Naive thymus-derived CD4-positive, alpha-beta T cell (primary cell): ENCODE measurements at regions of chr18 and their contacts with region 1.

Region 1: GRCh38 chr18:21740724-21741510 is at the start of gene MIB1:
- DNase-seq: peak in 8 of 9 donors; percentile 42 to 99 (median 99)
- ATAC-seq: peak; percentile 69
- H3K4me3 ChIP-seq: peak within 1 kb of the TSS; percentile 77
- H3K4me3 Mint-ChIP-seq: peak within 1 kb of the TSS; percentile 83 to 96 (median 94)
- H3K27ac ChIP-seq: peak within 1 kb of the TSS; percentile 83
- H3K27ac Mint-ChIP-seq: peak within 1 kb of the TSS; percentile 78 to 97 (median 94)
- H3K4me1 ChIP-seq: peaks cover 9 to 13% of the 10 kb centered on the region in 2 donors
- H3K4me1 Mint-ChIP-seq: peaks cover 21 to 58% (median 43%) of the 10 kb centered on the region in 7 donors
- H3K27me3 ChIP-seq: no peaks in the 10 kb centered on the region
- H3K27me3 Mint-ChIP-seq: peaks cover 0 to 18% (median 0%) of the 10 kb centered on the region in 5 donors
- total RNA-seq, gene MIB1: 16.0 to 35.2 (median 19.8) TPM

Region 2: GRCh38 chr18:21600526-21601410 is 140.1 kb before region 1 on chr18 and contains the start of gene ESCO1:
- CTCF ChIA-PET with region 1: no interaction called
- POLR2A ChIA-PET with region 1: interaction called, 30 read pairs
- intact Hi-C with region 1: loop called (anchors 1 kb)
- DNase-seq: peak; percentile 88 to 97 (median 95)
- ATAC-seq: peak; percentile 90
- H3K4me3 ChIP-seq: peak within 1 kb of the TSS; percentile 99
- H3K4me3 Mint-ChIP-seq: peak within 1 kb of the TSS; percentile 91 to 99 (median 96)
- H3K27ac ChIP-seq: peak within 1 kb of the TSS; percentile 84
- H3K27ac Mint-ChIP-seq: peak within 1 kb of the TSS; percentile 96 to 100 (median 99)
- H3K4me1 ChIP-seq: peaks cover 12 to 24% of the 10 kb centered on the region in 2 donors
- H3K4me1 Mint-ChIP-seq: peaks cover 16 to 57% (median 36%) of the 10 kb centered on the region in 7 donors
- H3K27me3 ChIP-seq: no peaks in the 10 kb centered on the region
- H3K27me3 Mint-ChIP-seq: no peaks in the 10 kb centered on the region
- total RNA-seq, gene ESCO1: 25.9 to 36.4 (median 35.1) TPM

Region 3: DNA sequence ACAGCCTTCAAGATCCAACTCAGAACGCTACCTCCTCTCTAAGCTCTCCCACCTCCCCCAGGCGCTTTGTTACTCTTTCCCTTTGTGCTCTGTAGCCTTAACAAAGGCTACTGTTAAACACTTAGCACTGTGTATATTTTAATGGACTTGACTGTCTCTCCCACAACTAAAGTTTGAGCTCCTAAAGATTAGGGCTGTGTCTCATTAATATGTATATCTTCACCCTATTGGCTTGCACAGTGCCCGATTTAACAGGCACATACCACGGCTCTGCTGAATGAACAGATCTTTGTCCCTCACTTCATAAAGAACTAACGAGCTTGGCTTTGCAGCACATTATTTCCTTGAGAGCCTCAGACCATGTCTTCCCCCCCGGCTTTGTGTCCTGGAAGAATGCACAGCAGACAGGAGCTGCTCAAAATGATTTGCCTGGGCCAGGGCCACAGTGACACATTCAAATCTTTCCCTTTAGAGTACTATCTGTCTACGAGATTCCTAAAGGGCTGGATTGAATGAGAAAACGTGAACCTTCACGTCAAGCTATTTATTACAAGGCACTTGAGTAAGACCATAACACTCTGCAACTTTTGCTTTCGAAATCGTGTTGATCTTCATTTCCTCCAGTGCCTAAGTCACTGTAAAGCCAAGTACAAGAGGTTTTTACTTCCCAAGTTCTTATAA is 58.4 kb before region 1 on chr18:
- CTCF ChIA-PET with region 1: no interaction called
- POLR2A ChIA-PET with region 1: interaction called, 4 read pairs
- intact Hi-C with region 1: loop called in 1 of 2 experiments (anchors 1 kb)
- DNase-seq: peak in 8 of 9 donors; percentile 24 to 63 (median 47)
- ATAC-seq: peak; percentile 84
- H3K4me3 ChIP-seq: peak overlapping the region; percentile 63
- H3K4me3 Mint-ChIP-seq: no peak overlapping the region
- H3K27ac ChIP-seq: peak overlapping the region; percentile 80
- H3K27ac Mint-ChIP-seq: no peak overlapping the region
- H3K4me1 ChIP-seq: peaks cover 7% of the 10 kb centered on the region in 2 donors
- H3K4me1 Mint-ChIP-seq: peaks cover 0 to 23% (median 10%) of the 10 kb centered on the region in 7 donors
- H3K27me3 ChIP-seq: no peaks in the 10 kb centered on the region
- H3K27me3 Mint-ChIP-seq: no peaks in the 10 kb centered on the region

Region 4: GRCh38 chr18:21851327-21851972 is 110.5 kb after region 1 on chr18:
- CTCF ChIA-PET with region 1: interaction called, 3 read pairs
- POLR2A ChIA-PET with region 1: no interaction called
- intact Hi-C with region 1: loop called in 1 of 2 experiments (anchors 5 kb)
- DNase-seq: peak in 4 of 9 donors; percentile 1 to 17 (median 4)
- ATAC-seq: no peak
- H3K4me3 ChIP-seq: no peak overlapping the region
- H3K4me3 Mint-ChIP-seq: no peak overlapping the region
- H3K27ac ChIP-seq: no peak overlapping the region
- H3K27ac Mint-ChIP-seq: peak overlapping the region in 1 of 9 donors; percentile 18
- H3K4me1 ChIP-seq: no peaks in the 10 kb centered on the region
- H3K4me1 Mint-ChIP-seq: peaks cover 0 to 11% (median 9%) of the 10 kb centered on the region in 7 donors
- H3K27me3 ChIP-seq: no peaks in the 10 kb centered on the region
- H3K27me3 Mint-ChIP-seq: no peaks in the 10 kb centered on the region